ENCODE measurements at regions of chr18 and their contacts with region 1.

Region 1: GRCh38 chr18:49178736-49179135 is 228.0 kb upstream of the SMAD7 start:
- DNase-seq: no peak
- H3K4me3 Mint-ChIP-seq: no peak overlapping the region
- H3K27ac Mint-ChIP-seq: no peak overlapping the region
- H3K4me1 Mint-ChIP-seq: peaks cover 33% of the 10 kb centered on the region
- H3K27me3 Mint-ChIP-seq: peaks cover 2% of the 10 kb centered on the region

Region 2: DNA sequence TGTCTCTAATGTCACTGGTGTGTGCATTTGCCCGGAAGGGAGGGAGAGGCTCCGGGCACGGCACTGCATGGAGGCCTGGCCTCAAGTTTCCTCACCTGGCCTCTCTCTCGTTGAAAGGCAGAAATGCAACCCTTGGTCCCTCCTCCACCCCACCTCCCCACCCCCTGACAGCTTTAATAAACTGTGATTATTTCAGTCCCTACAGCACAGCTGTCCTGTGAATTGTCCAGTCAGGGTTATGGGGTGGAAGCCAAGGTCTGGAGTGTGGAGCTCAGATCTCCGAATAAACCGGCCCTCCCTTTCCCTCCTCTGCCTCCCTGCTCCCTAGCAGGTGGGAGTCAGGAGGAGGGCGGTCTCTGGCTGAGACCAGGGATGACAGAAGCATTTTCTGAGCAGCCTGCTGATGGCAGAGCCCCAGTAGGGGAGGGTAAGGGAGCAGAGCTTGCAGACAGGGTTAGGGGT is 1049.1 kb before region 1 on chr18:
- intact Hi-C with region 1: loop called (anchors 10 kb)
- DNase-seq: no peak
- H3K4me3 Mint-ChIP-seq: no peak overlapping the region
- H3K27ac Mint-ChIP-seq: no peak overlapping the region
- H3K4me1 Mint-ChIP-seq: peaks cover 35% of the 10 kb centered on the region
- H3K27me3 Mint-ChIP-seq: peaks cover 60% of the 10 kb centered on the region

Region 3: GRCh38 chr18:48777026-48777743 is 401.6 kb before region 1 on chr18:
- intact Hi-C with region 1: loop called (anchors 10 kb)
- DNase-seq: peak; percentile 59
- H3K4me3 Mint-ChIP-seq: no peak overlapping the region
- H3K27ac Mint-ChIP-seq: no peak overlapping the region
- H3K4me1 Mint-ChIP-seq: peaks cover 14% of the 10 kb centered on the region
- H3K27me3 Mint-ChIP-seq: no peaks in the 10 kb centered on the region

Region 4: DNA sequence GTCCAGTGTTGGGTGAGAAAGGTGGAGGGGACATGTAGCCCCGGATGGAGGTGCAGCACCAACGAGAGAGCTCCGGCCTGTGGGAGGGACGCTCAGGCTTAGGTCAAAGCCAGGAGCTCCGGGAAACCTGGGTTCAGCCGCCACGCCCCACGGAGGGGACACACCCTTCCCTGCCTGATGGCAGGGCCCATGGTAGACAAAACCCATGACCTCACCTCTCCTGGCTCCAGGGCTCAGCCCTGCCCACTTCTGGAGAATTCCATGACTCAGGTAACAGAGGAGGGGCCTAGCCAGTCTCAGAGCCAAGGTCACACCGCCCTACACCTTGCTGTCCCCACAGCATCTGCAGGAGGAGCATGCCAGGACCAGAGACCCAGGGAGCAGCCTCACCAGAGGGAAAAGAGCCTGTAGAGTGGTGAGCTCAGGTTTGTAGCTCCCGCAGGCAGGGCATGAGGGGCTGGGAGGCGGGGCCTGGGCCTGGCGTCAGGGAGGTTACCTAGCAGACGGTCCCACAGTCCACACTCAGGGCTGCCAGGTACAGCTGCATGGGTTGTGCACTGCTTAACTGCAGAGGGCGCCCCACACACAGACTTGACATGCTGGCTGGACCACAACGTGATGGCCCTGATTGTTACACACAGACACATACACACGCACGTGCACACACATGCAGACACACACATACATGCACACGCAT is 157.2 kb before region 1 on chr18:
- intact Hi-C with region 1: loop called (anchors 1 kb)
- DNase-seq: peak; percentile 28
- H3K4me3 Mint-ChIP-seq: no peak overlapping the region
- H3K27ac Mint-ChIP-seq: no peak overlapping the region
- H3K4me1 Mint-ChIP-seq: no peaks in the 10 kb centered on the region
- H3K27me3 Mint-ChIP-seq: no peaks in the 10 kb centered on the region

Region 5: DNA sequence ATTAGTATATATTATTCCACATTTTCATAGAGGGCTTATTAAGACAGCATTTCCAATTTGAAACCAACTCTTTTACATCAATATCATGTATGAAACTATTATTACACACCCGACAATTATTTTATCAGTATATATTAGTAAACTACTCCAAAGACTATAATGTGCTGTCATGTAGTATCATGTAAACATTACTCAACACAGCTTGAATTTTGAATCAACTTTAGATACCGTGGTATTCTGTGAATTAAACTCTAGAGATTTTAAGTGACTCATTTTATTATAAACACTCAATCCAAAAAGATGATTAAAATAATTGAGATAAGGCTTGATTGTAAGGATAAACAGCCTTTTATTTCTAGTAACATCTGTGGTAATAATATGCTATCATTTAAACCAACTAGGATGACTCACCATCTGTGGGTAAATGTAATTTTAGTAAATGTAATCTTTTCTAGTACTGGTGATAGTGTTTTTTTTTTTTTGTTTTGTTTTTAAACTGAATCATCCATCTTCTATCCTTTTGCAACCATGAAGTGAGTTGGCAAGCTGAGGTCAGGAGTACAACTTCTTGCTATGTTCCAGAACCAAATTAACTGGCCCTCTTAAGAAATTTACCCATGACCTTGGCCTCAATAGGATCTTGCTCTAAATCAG is 83.6 kb before region 1 on chr18:
- intact Hi-C with region 1: no loop called
- DNase-seq: no peak
- H3K4me3 Mint-ChIP-seq: no peak overlapping the region
- H3K27ac Mint-ChIP-seq: no peak overlapping the region
- H3K4me1 Mint-ChIP-seq: peaks cover 6% of the 10 kb centered on the region
- H3K27me3 Mint-ChIP-seq: no peaks in the 10 kb centered on the region

Region 6: DNA sequence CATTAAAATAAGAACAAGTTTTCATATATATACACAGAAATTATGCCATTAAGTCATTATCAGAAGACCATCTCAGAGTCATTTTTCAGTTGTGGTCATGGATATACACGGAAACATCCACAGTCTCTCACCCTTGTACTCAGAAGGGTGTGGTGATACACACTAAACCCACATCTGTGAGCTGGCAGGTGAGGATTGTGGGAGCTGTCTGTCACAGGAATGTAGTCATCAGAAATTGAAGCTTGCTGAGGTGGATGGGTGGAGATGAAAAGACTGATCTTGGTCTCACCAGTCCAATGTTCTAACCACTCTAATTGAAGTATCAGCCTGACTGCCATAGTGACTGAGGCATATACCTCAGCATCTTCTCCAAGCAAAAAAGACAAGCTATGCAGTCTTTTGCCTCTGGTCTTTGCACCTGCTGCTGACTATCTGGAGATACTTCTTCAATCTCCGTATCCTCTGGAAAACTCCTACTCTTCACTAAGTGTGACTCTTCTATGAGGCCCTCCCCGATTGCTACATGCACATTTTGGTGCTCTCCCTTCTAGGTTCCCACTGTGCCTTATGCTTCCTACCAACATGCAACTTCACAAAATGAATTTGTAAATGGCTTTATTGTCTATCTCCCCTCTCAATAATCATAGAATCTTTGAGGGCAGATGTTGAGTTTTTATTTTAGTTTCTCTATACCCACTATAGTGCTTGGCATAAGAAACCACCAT is 48.9 kb after region 1 on chr18:
- intact Hi-C with region 1: loop called (anchors 5 kb)
- DNase-seq: peak; percentile 48
- H3K4me3 Mint-ChIP-seq: no peak overlapping the region
- H3K27ac Mint-ChIP-seq: no peak overlapping the region
- H3K4me1 Mint-ChIP-seq: peaks cover 14% of the 10 kb centered on the region
- H3K27me3 Mint-ChIP-seq: no peaks in the 10 kb centered on the region